ENCODE measurements at regions of chr11 and their contacts with region 1.

Region 1: DNA sequence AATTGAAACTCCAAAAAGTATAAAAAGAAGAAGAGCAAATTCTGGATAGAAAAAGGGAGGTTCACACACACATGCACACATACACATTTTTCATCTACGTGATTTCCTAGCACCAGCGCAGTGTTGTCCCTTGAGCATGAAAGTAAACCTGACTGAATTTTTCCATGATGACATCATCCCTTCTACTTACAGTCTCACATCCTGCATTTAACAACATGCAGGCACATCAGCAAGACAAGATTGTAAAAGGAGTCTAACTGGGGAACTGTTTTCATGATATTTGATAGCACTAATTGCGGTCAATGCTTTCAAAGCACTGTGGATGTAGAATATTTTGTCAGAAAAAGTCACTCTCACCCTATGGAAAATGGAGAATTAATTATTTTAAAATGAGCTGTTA is 36.6 kb downstream of the GAS2 start:
- DNase-seq: peak; percentile 21
- ATAC-seq: peak; percentile 76
- H3K4me3 ChIP-seq: no peak overlapping the region
- H3K27ac ChIP-seq: no peak overlapping the region
- H3K4me1 ChIP-seq: no peaks in the 10 kb centered on the region
- H3K27me3 ChIP-seq: no peaks in the 10 kb centered on the region
- CTCF ChIP-seq: no peak
- EP300 ChIP-seq: peak in 1 of 2 experiments; percentile 43; a peak in 1 of 4 replicates
- POLR2A ChIP-seq: no peak
- RAD21 ChIP-seq: no peak

Region 2: GRCh38 chr11:21909152-21909551 is 793.9 kb before region 1 on chr11:
- CTCF ChIA-PET with region 1: no interaction called
- POLR2A ChIA-PET with region 1: no interaction called
- RAD21 ChIA-PET with region 1: no interaction called
- SMC1A ChIA-PET with region 1: no interaction called
- in situ Hi-C with region 1: no loop called
- intact Hi-C with region 1: no loop called
- DNase-seq: no peak
- ATAC-seq: no peak
- H3K4me3 ChIP-seq: no peak overlapping the region
- H3K27ac ChIP-seq: no peak overlapping the region
- H3K4me1 ChIP-seq: no peaks in the 10 kb centered on the region
- H3K27me3 ChIP-seq: no peaks in the 10 kb centered on the region
- CTCF ChIP-seq: no peak
- EP300 ChIP-seq: no peak
- POLR2A ChIP-seq: no peak
- RAD21 ChIP-seq: no peak

Region 3: DNA sequence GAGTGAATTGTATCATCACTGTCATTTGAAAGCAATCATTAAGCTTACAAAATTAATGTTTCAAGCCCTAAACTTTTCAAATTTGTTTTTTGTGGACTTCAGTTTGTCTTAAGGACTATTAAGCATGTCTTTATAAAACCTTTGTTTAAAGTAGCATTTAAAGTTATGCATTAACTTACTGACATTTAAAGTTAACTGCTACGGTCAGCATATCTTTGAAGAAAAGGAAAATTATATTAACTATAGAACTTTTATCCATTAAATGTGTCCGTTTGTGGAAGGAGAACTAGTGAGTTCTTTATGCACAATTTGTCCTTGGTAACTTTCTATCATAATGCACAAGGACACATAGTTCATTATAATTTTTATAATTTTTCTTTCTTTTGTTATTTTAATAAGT is 180.8 kb before region 1 on chr11:
- CTCF ChIA-PET with region 1: no interaction called
- POLR2A ChIA-PET with region 1: no interaction called
- RAD21 ChIA-PET with region 1: no interaction called
- SMC1A ChIA-PET with region 1: no interaction called
- in situ Hi-C with region 1: no loop called
- intact Hi-C with region 1: no loop called
- DNase-seq: no peak
- ATAC-seq: no peak
- H3K4me3 ChIP-seq: no peak overlapping the region
- H3K27ac ChIP-seq: no peak overlapping the region
- H3K4me1 ChIP-seq: no peaks in the 10 kb centered on the region
- H3K27me3 ChIP-seq: no peaks in the 10 kb centered on the region
- CTCF ChIP-seq: no peak
- EP300 ChIP-seq: no peak
- POLR2A ChIP-seq: no peak
- RAD21 ChIP-seq: no peak

Region 4: DNA sequence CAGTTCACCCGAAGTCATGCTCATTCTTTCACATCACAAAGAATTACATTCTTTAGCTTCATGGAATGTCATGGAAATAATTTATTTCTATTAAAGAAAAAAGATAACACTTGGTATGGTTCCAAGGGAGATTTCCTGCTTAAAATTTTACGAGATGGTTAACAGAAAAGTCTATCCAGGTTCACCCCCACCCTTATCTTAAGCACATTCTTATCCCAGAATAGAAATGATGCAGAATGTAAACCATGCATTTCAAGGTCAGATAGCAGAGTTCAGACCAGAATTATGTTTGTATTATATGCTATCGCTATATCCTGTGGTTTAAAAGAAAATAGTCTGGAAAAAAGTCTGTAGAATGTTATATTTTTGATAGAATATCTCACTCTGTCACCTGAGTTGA is 22.0 kb after region 1 on chr11:
- CTCF ChIA-PET with region 1: interaction called, 4 read pairs
- POLR2A ChIA-PET with region 1: interaction called, 4 read pairs
- RAD21 ChIA-PET with region 1: interaction called, 18 read pairs
- SMC1A ChIA-PET with region 1: interaction called, 15 read pairs
- in situ Hi-C with region 1: no loop called
- intact Hi-C with region 1: no loop called
- DNase-seq: no peak
- ATAC-seq: no peak
- H3K4me3 ChIP-seq: no peak overlapping the region
- H3K27ac ChIP-seq: no peak overlapping the region
- H3K4me1 ChIP-seq: no peaks in the 10 kb centered on the region
- H3K27me3 ChIP-seq: no peaks in the 10 kb centered on the region
- CTCF ChIP-seq: no peak
- EP300 ChIP-seq: no peak
- POLR2A ChIP-seq: no peak
- RAD21 ChIP-seq: no peak

Measured in GM12878 (cell line).